ENCODE measurements at regions of chr4 and their contacts with region 1.

Region 1: GRCh38 chr4:139229534-139230039 is 50.4 kb downstream of the MGARP start:
- DNase-seq: no peak
- H3K4me3 ChIP-seq: no peak overlapping the region
- H3K27ac ChIP-seq: no peak overlapping the region
- H3K4me1 ChIP-seq: no peaks in the 10 kb centered on the region
- H3K27me3 ChIP-seq: no peaks in the 10 kb centered on the region
- CTCF ChIP-seq: peak; percentile 71

Region 2: DNA sequence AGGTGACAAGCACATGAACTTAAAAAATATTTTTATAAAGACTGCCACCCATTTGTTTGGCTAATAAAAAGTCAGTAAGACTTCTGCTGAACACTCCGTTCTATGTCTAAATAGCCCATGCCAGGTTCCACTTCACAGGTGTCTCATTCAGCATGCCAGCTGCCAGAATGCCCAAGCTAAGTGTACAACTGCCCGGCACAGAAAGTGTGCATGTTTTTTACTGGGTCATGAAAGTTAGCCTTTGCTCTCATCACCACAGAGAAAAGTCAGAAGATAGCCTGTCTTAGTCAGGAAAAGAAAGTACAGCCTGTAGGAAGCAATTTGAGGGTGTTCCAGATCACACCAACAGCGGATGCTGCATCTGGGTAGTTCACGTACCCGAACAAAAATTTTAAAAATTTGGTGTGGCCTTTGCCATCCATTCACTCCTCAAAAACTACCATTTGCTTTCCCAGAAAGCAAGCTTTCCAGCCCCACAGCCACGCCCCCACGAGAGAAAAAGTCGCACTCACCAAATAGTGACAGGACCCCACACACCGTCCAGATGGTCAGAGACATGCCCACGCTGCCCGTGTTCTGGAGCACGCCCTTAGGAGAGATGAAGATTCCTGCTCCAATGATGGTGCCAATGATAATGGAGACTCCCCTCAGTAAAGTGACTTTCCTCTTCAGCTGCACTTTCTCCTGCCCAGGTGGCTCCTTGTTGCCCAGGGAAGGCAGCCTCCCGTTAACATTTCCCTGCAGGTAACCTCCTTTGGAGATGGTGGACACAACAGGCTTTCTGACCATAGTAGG is 988.1 kb before region 1 on chr4:
- CTCF ChIA-PET with region 1: no interaction called
- POLR2A ChIA-PET with region 1: no interaction called
- intact Hi-C with region 1: no loop called
- DNase-seq: peak; percentile 37 to 38
- H3K4me3 ChIP-seq: peak overlapping the region; percentile 88
- H3K27ac ChIP-seq: peak overlapping the region; percentile 100
- H3K4me1 ChIP-seq: peaks cover 33% of the 10 kb centered on the region
- H3K27me3 ChIP-seq: no peaks in the 10 kb centered on the region
- CTCF ChIP-seq: no peak

Region 3: DNA sequence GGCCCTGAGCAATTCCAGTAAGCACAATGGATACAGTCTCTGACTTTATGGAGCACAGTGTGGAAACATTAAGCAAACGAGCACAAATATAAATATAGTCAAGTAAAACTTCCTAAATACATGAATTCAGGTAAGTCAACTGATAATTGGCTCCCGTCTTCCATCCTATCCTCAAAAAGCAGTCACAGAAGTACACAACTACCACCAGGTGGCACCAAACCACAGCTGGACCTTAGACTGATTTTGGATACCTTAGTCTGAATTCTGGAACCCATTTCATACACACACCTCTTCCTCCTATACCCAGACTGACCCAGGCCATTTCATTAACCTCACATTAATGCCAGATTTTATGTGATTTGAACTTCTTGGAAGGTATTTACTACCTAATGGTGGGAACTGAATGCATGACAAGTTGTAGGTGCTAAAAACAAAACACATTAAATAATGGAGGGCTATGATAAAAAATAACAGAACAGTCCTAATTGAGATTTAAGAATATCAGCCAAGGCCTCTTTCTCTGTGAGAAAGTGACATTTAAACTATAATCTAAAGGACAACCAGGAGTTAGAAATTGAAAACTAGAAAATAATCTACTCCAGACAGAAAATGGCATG is 130.1 kb before region 1 on chr4:
- CTCF ChIA-PET with region 1: no interaction called
- POLR2A ChIA-PET with region 1: no interaction called
- intact Hi-C with region 1: loop called (anchors 5 kb)
- DNase-seq: peak; percentile 47 to 64
- H3K4me3 ChIP-seq: no peak overlapping the region
- H3K27ac ChIP-seq: no peak overlapping the region
- H3K4me1 ChIP-seq: no peaks in the 10 kb centered on the region
- H3K27me3 ChIP-seq: no peaks in the 10 kb centered on the region
- CTCF ChIP-seq: peak; percentile 83

Region 4: GRCh38 chr4:139184129-139184528 is 45.5 kb before region 1 on chr4:
- CTCF ChIA-PET with region 1: no interaction called
- POLR2A ChIA-PET with region 1: no interaction called
- intact Hi-C with region 1: loop called (anchors 5 kb)
- DNase-seq: no peak
- H3K4me3 ChIP-seq: no peak overlapping the region
- H3K27ac ChIP-seq: no peak overlapping the region
- H3K4me1 ChIP-seq: no peaks in the 10 kb centered on the region
- H3K27me3 ChIP-seq: no peaks in the 10 kb centered on the region
- CTCF ChIP-seq: 0 out of 2 replicates have a peak, but pooled peaks have one; percentile 20

Region 5: GRCh38 chr4:139241086-139241783 is 11.6 kb after region 1 on chr4:
- CTCF ChIA-PET with region 1: no interaction called
- POLR2A ChIA-PET with region 1: no interaction called
- intact Hi-C with region 1: no loop called
- DNase-seq: no peak
- H3K4me3 ChIP-seq: no peak overlapping the region
- H3K27ac ChIP-seq: no peak overlapping the region
- H3K4me1 ChIP-seq: peaks cover 11% of the 10 kb centered on the region
- H3K27me3 ChIP-seq: no peaks in the 10 kb centered on the region
- CTCF ChIP-seq: no peak

Region 6: DNA sequence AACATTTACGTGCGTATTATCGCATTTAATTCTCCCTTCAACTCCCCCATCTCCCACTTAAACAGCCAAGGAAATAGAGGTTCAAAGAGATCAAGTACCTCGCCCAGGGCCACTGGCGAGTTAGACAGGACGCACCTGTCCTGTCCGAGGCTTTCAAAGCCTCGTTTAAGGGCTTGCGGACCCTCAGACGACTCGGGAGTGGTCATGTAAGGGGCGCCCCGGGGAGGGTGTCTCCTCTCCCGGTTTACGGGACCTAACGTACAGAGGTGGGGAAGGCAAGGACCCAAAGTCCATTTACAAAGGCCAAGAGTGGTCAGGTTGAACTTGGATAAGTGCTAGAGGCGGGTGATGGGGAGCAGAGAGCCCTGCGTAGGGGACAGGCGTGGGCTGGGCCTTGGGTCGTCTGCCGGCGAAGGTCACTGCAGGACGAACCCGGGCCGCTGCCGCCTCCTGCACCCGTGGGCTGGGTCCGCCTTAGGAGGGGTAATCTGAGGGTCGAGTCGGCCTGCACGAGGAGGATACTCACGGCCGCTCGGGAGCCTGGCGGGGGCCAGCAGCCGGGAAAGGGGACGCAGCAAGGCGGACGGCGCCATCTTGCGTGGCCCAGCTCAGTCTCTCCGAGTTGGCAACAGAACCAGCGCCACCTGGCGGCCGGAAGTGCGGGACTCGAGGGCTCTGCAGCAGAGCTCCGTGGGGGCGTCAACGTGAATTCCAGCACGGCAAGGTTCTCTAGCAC is 65.8 kb after region 1 on chr4:
- CTCF ChIA-PET with region 1: no interaction called
- POLR2A ChIA-PET with region 1: no interaction called
- intact Hi-C with region 1: loop called (anchors 2 kb)
- DNase-seq: peak; percentile 66 to 91
- H3K4me3 ChIP-seq: peak overlapping the region; percentile 78
- H3K27ac ChIP-seq: no peak overlapping the region
- H3K4me1 ChIP-seq: peaks cover 21% of the 10 kb centered on the region
- H3K27me3 ChIP-seq: no peaks in the 10 kb centered on the region
- CTCF ChIP-seq: peak; percentile 85

Region 7: DNA sequence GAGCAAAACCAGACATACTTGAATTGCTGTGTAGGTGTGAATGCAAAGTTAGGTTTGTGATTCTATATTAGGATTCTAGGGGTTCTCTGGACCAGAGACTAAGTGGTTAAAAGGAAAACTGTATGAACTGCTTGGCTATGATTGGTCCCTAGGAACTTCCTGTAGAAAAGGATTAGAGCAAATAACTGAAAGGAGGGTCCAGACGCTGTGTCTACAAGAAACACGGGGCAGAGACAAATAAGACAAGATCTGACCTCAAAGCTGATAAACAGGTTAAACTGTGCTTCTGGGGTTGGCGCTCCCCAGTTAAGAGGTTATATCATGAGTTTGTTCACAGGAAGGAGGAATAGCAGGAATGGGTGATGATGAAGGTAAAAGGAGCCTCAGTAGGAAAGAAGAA is 619.6 kb after region 1 on chr4:
- CTCF ChIA-PET with region 1: no interaction called
- POLR2A ChIA-PET with region 1: no interaction called
- intact Hi-C with region 1: no loop called
- DNase-seq: peak in 1 of 2 experiments; percentile 16
- H3K4me3 ChIP-seq: no peak overlapping the region
- H3K27ac ChIP-seq: no peak overlapping the region
- H3K4me1 ChIP-seq: no peaks in the 10 kb centered on the region
- H3K27me3 ChIP-seq: no peaks in the 10 kb centered on the region
- CTCF ChIP-seq: no peak

Measured in PC-9 (cell line).